HepG2 (cell line): ENCODE measurements at regions of chr14 and their contacts with region 1.

Region 1: DNA sequence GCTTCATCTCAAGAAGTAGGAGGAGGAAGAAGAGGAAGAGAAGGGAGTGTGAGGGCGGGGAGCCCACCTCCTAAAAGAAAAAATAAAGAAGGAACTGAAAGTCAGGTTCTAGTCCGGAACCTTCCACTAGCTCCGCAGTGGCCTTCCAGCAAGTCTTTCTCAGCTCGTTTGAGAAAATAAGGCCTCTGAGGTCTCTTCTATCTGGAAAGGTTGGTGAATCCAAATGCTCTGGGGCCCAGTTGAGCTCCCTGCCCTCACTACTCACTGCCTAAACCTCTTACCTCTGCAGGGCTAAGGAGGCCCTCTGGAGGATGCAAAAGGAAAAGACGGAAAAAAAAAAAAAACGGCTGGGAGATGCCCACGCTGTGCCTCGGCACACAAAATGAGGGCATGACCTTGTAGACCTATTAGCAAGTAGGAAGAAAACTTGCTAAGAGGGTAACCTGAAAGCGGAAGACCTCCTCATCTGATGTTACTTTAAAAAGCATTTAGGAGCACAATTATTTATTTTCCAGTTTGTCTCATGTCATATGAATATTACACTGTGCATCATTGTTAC is 35.9 kb downstream of the FBLN5 start:
- DNase-seq: peak; percentile 47
- ATAC-seq: peak; percentile 90
- H3K4me3 ChIP-seq: no peak overlapping the region
- H3K27ac ChIP-seq: no peak overlapping the region
- H3K4me1 ChIP-seq: peaks cover 3% of the 10 kb centered on the region; the same call in 1 of the 2 replicates
- H3K27me3 ChIP-seq: no peaks in the 10 kb centered on the region
- CTCF ChIP-seq: peak; percentile 74
- EP300 ChIP-seq: no peak
- POLR2A ChIP-seq: no peak
- RAD21 ChIP-seq: peak; percentile 37; the same call in 1 of the 2 replicates

Region 2: GRCh38 chr14:91649930-91650329 is 261.6 kb before region 1 on chr14:
- CTCF ChIA-PET with region 1: interaction called, 7 read pairs
- POLR2A ChIA-PET with region 1: no interaction called
- in situ Hi-C with region 1: loop called (anchors 25 kb)
- intact Hi-C with region 1: loop called (anchors 5 kb)
- DNase-seq: peak; percentile 13
- ATAC-seq: no peak
- H3K4me3 ChIP-seq: no peak overlapping the region
- H3K27ac ChIP-seq: no peak overlapping the region
- H3K4me1 ChIP-seq: no peaks in the 10 kb centered on the region
- H3K27me3 ChIP-seq: no peaks in the 10 kb centered on the region
- CTCF ChIP-seq: peak; percentile 54
- EP300 ChIP-seq: no peak
- POLR2A ChIP-seq: no peak
- RAD21 ChIP-seq: no peak

Region 3: DNA sequence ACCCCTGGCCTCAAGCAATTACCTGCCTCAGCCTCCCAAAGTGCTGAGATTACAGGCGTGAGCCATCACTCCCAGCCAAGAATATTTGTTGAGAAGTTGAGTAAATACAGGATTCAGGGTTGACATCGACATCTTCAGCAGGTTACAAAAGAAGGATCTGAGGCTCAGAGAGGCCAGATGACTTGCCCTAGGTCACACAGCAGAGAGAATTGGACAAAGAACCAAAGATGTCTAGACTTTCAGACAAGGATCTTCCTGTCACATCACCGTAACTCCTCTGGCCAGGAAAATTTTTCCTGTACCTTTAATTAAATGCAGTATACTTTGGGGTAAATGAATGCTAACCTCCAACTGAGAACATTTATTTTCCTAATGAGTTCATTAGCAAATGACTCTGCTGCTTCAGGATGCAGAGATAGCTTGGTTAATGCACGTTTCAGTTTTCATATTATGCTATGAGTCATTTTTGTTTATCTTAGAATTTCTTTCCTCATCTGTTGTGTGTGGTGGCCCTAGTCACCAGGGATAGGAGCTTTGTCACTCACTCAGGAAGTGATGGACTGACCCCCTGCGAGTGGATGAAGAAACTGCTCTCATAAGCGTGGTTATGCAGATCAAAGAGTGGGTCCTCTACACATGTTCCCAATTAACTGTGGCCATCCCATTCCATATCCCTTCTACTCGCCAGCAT is 53.2 kb before region 1 on chr14:
- CTCF ChIA-PET with region 1: interaction called, 11 read pairs
- POLR2A ChIA-PET with region 1: interaction called, 4 read pairs
- in situ Hi-C with region 1: no loop called
- intact Hi-C with region 1: loop called (anchors 1 kb)
- DNase-seq: peak; percentile 12
- ATAC-seq: peak; percentile 59
- H3K4me3 ChIP-seq: no peak overlapping the region
- H3K27ac ChIP-seq: no peak overlapping the region
- H3K4me1 ChIP-seq: no peaks in the 10 kb centered on the region
- H3K27me3 ChIP-seq: peaks cover 2 to 11% of the 10 kb centered on the region in 2 experiments; a peak in 3 of 5 replicates
- CTCF ChIP-seq: no peak
- EP300 ChIP-seq: no peak
- POLR2A ChIP-seq: no peak
- RAD21 ChIP-seq: no peak